Sciatic nerve (tissue), 2 donors: ENCODE measurements at regions of chr2 and their contacts with region 1.

Region 1: DNA sequence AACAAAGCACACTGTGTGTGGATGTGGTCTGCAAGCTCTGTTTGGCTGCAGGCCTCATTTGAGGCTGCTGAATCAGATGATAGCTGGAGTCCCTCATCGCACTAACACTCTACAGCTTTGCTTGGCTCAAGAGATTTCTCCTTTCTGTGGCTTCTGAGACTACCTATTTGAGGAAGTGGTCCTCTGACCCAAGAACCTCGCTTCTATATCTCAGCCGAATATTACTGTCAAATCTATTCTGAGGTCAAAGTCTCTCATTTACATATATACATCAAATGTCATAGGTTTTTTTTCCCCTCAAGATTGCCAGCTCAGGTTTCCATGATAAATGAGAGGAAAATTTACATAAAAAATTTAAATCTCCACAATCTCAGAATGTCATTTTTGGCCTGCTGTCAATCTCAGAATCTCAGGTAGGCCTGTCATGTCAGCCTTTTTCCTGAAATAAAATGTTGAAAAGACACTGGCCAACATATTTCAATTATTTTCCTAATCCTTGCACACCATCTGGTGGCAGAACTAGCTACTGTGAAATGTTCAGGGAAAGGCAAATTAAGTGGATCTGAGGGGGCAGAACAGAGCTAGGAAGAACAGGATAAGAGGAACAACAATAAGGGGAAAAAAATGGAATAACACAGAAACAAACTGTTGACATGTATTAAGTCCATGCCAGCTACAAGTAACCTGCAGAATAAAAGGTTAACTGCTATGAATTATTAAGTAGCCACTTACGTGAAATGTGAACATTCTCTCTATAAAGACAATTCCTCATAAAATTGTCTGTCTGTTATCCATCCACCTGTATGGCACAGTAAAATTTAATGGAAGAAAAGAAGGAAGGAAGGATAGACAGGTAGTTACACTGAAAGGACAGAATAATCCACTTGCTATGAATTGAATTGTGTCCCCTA is 39.3 kb downstream of the AP1S3 start:
- DNase-seq: no peak
- ATAC-seq: peak; percentile 76

Region 2: GRCh38 chr2:222976521-222977076 is 821.5 kb before region 1 on chr2:
- intact Hi-C with region 1: loop called (anchors 10 kb)
- DNase-seq: no peak
- ATAC-seq: no peak

Region 3: DNA sequence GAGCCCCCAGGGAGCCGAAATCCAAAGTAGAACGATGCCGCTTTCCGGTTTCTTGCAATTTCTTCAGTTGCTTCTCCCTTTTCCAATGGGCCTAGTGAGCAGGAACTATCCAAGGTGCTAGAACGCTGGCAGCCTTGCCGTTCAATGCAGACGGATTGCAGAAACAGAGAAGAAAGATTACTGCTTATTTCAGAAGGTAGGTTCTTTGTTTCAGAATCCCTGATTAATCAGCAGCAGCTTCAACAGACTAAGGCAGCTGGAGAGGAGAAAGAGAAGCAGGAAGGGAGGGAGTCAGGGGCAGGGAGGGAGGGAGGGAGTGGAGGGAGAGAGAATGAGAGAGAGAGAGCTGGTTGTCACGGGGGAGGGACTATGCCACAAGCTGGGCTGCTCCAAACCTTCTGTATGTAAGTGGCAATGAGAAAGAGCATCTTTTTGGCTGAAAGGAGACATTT is 1602.0 kb after region 1 on chr2:
- intact Hi-C with region 1: loop called (anchors 10 kb)
- DNase-seq: no peak
- ATAC-seq: no peak